MCF 10A (cell line): ENCODE measurements at regions of chr5 and their contacts with region 1.

Region 1: DNA sequence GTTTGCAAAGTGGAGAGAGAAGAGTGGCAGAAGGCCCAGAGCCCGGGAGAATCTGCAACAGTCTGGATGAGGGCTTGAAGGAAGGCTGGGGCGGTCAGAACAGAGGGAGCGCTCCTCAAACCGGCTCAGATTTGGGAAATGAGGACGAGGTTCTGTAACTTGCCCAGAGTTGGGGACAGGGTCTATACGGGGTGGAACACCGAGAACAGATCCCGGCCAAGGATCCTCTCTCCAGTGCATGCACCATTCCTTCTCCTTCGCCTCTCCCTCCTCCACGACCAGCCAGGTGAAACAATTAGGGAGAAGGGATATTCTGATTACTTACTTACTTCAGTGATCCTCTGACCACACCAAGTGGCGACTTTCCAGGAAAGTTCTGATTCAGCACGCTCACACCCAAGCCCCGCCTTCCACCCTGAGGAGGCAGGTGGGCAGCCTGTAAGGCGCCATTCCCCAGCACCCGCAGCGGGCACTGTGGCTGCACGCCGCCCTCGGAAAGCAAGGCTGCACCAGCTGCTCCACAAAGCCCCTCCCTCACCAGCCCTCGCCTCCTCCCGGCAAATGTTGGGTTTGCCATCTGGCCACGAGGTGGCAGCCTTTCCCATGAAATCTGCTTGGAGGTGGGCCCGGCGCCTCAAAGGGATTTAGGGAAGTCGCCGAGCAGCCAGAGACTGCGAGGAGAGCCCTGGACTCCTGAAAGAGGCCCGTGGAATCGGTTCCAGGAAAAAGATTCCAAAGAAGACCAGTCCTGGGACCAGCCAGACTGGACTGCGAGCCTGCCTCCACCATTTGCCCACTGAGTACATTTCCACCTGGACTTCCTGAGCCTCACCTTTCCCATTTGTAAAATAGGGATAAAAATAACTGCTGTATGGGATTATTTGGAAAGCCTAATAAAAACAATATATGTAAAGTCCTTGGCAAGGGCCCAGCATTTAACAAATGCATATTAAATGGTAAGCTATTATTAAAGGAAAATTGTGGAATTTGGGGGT is 22.2 kb upstream of the WWC1 start:
- DNase-seq: peak; percentile 97
- H3K4me3 Mint-ChIP-seq: peak overlapping the region; percentile 71
- H3K27ac Mint-ChIP-seq: no peak overlapping the region
- H3K4me1 Mint-ChIP-seq: peaks cover 17% of the 10 kb centered on the region
- H3K27me3 Mint-ChIP-seq: no peaks in the 10 kb centered on the region
- CTCF ChIP-seq: peak; percentile 98

Region 2: DNA sequence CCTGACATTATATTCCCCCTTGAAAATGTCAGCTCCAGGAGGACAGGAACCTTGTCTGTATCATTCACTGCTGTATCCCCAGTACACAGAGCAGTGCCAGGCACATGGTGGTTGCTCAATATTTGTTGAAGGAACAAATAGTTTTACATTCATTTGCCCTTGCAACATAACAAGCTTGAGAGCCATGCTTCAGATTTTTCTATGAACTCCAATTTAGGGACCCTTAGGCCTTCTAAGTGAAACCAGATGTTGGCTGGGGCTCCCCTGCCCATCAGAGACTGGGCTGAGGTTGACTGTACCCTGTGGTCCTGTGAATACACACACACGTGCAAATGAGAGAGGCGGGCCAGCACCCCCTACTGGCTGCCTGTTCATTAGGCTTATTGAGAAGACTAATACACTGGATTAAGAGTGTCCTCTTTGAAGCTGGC is 192.7 kb before region 1 on chr5:
- CTCF ChIA-PET with region 1: no interaction called
- POLR2A ChIA-PET with region 1: no interaction called
- intact Hi-C with region 1: no loop called
- DNase-seq: peak; percentile 39
- H3K4me3 Mint-ChIP-seq: no peak overlapping the region
- H3K27ac Mint-ChIP-seq: peak overlapping the region; percentile 32
- H3K4me1 Mint-ChIP-seq: peaks cover 6% of the 10 kb centered on the region
- H3K27me3 Mint-ChIP-seq: peaks cover 10% of the 10 kb centered on the region
- CTCF ChIP-seq: peak; percentile 37

Region 3: DNA sequence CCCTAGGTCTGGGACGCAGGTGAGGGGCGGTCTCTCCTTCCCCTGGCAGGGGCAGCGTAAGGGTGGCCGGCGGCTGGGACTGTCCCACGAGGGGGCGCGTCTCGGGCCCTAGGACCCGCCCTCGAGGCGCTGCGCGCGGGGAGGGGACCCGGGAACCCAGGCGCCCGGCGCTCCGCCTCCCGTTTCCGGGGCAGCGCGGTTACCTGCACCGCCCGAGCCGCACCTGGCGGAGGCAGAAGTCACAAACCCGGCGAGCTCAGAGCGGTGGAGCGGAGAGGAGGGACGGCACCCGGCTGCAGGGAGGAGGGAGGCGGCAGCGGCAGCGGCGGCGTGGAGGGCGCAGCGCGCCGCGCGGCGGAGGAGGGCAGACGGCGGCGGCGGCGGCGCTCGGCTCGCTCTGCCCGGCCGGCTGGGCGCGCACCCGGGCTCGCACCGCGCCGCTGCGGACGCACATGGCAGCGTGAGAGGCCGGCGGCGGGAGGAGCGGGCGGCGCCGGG is 22.3 kb after region 1 on chr5 and contains the start of gene WWC1:
- CTCF ChIA-PET with region 1: interaction called, 37 read pairs
- POLR2A ChIA-PET with region 1: interaction called, 4 read pairs
- intact Hi-C with region 1: loop called (anchors 2 kb)
- DNase-seq: peak; percentile 88
- H3K4me3 Mint-ChIP-seq: peak within 1 kb of the TSS; percentile 82
- H3K27ac Mint-ChIP-seq: peak within 1 kb of the TSS; percentile 81
- H3K4me1 Mint-ChIP-seq: peaks cover 51% of the 10 kb centered on the region
- H3K27me3 Mint-ChIP-seq: no peaks in the 10 kb centered on the region
- CTCF ChIP-seq: no peak
- total RNA-seq, gene WWC1: 27.8 and 47.0 TPM in 2 replicates

Region 4: DNA sequence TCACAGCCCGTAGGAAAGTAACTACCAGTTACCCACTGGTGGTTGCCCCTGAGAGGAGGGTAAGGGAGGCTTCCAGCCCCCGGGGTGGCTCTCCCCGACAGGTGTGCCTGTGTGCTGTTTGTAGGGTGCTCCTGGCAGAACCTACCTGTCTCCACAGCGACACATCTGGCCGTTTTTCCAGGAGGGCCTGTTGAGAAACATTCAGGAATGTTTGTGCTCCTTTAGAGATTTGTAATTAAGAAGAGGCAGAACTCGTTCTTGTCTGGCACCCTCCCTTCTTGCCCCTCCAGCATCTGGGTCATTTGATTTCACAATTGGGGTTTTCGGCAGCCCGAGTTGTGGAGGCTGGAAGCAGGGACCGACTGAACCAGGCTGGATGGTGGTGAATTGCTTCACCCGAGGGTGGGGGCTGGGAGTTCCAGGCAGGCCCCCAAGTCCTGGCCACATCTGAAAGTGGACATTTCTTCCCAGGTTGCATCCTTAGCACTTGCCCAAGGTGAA is 96.4 kb after region 1 on chr5:
- CTCF ChIA-PET with region 1: interaction called, 24 read pairs
- POLR2A ChIA-PET with region 1: interaction called, 6 read pairs
- intact Hi-C with region 1: loop called (anchors 1 kb)
- DNase-seq: peak; percentile 92
- H3K4me3 Mint-ChIP-seq: peak overlapping the region; percentile 20
- H3K27ac Mint-ChIP-seq: peak overlapping the region; percentile 35
- H3K4me1 Mint-ChIP-seq: peaks cover 32% of the 10 kb centered on the region
- H3K27me3 Mint-ChIP-seq: no peaks in the 10 kb centered on the region
- CTCF ChIP-seq: peak; percentile 52

Region 5: DNA sequence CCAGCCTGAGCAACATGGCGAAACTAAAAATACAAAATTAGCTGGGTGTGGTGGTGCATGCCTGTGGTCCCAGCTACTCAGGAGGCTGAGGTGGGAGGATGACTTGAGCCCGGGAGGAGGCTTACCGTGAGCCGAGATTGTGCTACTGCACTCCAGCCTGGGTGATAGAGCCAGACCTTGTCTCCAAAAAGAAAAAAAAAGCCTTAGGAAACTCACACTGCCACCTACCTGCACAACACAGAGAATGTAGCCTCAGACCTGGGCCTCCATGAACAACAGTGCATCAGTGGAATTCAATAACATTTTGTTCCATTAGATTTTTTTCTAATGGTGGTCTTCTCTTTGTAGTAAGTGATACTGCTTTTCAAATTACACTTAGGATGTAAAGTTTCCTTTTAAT is 153.2 kb after region 1 on chr5:
- CTCF ChIA-PET with region 1: interaction called, 120 read pairs
- POLR2A ChIA-PET with region 1: interaction called, 15 read pairs
- intact Hi-C with region 1: loop called (anchors 1 kb)
- DNase-seq: peak; percentile 61
- H3K4me3 Mint-ChIP-seq: no peak overlapping the region
- H3K27ac Mint-ChIP-seq: no peak overlapping the region
- H3K4me1 Mint-ChIP-seq: no peaks in the 10 kb centered on the region
- H3K27me3 Mint-ChIP-seq: no peaks in the 10 kb centered on the region
- CTCF ChIP-seq: peak; percentile 55

Region 6: GRCh38 chr5:168472329-168472728 is 203.1 kb after region 1 on chr5:
- CTCF ChIA-PET with region 1: interaction called, 14 read pairs
- POLR2A ChIA-PET with region 1: no interaction called
- intact Hi-C with region 1: loop called (anchors 1 kb)
- DNase-seq: peak; percentile 78
- H3K4me3 Mint-ChIP-seq: no peak overlapping the region
- H3K27ac Mint-ChIP-seq: peak overlapping the region; percentile 6
- H3K4me1 Mint-ChIP-seq: peaks cover 15% of the 10 kb centered on the region
- H3K27me3 Mint-ChIP-seq: no peaks in the 10 kb centered on the region
- CTCF ChIP-seq: peak; percentile 60

Region 7: GRCh38 chr5:168579488-168580226 is 310.4 kb after region 1 on chr5:
- CTCF ChIA-PET with region 1: no interaction called
- POLR2A ChIA-PET with region 1: interaction called, 3 read pairs
- intact Hi-C with region 1: loop called (anchors 1 kb)
- DNase-seq: peak; percentile 100
- H3K4me3 Mint-ChIP-seq: peak overlapping the region; percentile 83
- H3K27ac Mint-ChIP-seq: peak overlapping the region; percentile 96
- H3K4me1 Mint-ChIP-seq: peaks cover 28% of the 10 kb centered on the region
- H3K27me3 Mint-ChIP-seq: no peaks in the 10 kb centered on the region
- CTCF ChIP-seq: no peak

Region 8: GRCh38 chr5:169302491-169303118 is 1033.4 kb after region 1 on chr5:
- CTCF ChIA-PET with region 1: interaction called, 3 read pairs
- POLR2A ChIA-PET with region 1: no interaction called
- intact Hi-C with region 1: loop called (anchors 1 kb)
- DNase-seq: peak; percentile 86
- H3K4me3 Mint-ChIP-seq: peak overlapping the region; percentile 74
- H3K27ac Mint-ChIP-seq: no peak overlapping the region
- H3K4me1 Mint-ChIP-seq: peaks cover 19% of the 10 kb centered on the region
- H3K27me3 Mint-ChIP-seq: no peaks in the 10 kb centered on the region
- CTCF ChIP-seq: peak; percentile 95